ENCODE measurements at regions of chr1 and their contacts with region 1.

Region 1: DNA sequence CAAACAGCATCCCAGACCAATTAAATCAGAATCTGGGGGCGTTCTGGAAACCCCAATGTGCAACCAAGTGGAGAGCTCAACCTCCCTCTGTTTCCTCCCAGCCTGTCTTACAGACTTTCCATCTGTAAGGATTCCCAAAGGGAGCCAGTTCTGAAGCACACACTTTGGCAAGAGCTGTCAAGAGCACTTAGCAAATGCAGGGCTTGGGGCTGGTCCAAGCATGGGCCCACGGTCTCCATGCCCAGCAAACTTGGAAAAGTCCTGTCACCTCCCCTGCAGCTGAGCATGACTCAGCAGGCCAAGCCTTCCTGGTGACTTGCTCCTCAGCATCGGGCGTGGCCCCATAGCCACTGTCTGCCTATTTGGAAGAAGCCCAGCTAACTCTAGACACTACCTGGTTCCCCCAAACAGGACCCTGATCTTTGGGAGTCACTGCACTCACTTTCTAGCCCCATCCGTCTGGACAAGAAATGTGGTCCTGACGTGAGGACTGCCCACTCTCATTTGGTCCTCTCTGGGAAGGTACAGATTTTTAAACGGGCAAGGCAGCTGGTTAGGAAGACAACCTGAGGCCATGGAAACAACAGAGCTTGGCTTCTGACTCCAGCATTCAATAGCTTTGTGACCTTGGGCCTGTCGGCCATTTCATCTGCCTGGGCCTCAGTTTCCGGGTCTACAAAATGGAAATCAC is 16.9 kb downstream of the SLC2A1 start:
- DNase-seq: peak; percentile 80
- ATAC-seq: peak; percentile 50
- H3K4me3 ChIP-seq: peak overlapping the region; percentile 19 to 43
- H3K27ac ChIP-seq: peak overlapping the region; percentile 84
- H3K4me1 ChIP-seq: peaks cover 99 to 100% of the 10 kb centered on the region in 2 experiments
- H3K27me3 ChIP-seq: no peaks in the 10 kb centered on the region
- CTCF ChIP-seq: no peak
- POLR2A ChIP-seq: no peak
- RAD21 ChIP-seq: no peak

Region 2: DNA sequence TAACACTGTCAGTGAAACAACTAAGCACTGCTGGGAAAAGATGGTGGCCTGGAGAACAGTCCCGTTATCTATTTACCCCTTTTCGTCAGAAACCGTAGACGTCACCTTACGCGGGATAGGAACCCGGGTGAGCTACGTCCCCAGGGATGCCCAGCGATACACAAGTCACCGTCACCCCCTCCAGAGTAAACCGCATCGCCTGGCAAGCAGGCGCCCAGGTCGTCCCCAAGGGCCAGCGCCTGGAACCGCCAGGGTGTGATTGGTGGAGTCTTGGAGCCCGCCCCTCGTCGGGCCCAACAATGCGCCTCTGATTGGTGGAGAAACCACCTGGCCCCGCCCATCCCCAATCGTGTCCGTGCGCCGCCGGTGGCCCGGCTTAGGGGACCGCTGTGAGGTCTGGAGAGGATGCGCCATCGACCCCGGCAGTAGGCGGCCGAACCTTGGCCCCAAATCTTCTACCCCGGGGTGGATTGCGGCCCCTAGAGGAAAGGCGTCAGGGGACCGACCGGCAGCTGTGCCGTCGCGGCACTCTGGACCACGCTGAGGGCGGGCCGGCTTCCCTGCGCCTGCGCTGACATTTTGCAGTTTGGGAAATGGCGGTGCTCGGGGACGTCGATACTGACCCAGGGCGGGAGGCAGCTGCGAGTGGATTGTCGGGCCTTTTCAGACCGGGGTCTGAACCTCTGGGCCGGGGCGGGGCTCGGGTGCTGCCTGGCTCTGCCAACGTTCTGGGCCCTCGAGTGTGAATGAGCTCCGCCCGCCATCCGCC is 17.5 kb before region 1 on chr1:
- CTCF ChIA-PET with region 1: interaction called, 12 read pairs
- POLR2A ChIA-PET with region 1: interaction called, 3 read pairs
- RAD21 ChIA-PET with region 1: interaction called, 3 to 4 read pairs
- intact Hi-C with region 1: loop called (anchors 1 kb)
- DNase-seq: peak; percentile 82
- ATAC-seq: peak; percentile 84
- H3K4me3 ChIP-seq: peak overlapping the region; percentile 61 to 70
- H3K27ac ChIP-seq: peak overlapping the region; percentile 81
- H3K4me1 ChIP-seq: peaks cover 9 to 52% of the 10 kb centered on the region in 2 experiments; a peak in 3 of 4 replicates
- H3K27me3 ChIP-seq: no peaks in the 10 kb centered on the region
- CTCF ChIP-seq: 0 out of 6 replicates have a peak, but pooled peaks of 2 of the 3 experiments have one; percentile 21 to 24
- POLR2A ChIP-seq: peak; percentile 72
- RAD21 ChIP-seq: no peak

Region 3: DNA sequence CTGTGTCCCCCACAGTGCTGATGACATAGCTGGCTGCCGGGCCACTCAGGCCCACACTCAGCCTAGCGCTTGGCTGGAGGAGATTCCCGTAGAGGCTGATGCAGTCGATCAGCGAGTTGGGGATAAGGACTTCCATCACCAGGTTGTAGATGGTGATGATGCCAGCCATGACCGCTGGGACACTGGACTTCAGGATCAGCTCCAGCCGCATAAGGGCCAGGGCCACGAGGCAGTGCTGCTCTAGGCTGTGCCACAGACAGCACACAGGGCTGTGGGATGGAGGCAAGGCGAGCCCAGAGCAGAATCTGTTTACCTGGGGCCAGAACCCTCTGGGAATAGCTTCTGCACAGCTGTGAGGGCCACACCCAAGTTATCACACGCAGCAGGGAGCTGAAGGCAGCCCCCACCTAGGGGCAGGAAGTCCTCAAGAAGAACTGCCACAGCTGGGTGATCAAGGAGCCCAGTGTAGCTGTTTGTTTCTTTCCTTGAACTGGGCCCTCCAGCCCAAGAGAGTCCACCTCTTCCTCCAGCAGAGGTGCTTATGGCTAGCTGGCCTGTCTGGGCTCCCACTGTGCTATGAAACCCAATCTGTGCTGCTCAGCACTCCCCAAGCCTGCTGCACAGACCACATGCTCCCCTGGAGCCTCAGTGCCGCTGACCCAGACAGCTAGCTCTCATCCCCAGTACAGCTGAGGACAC is 10.7 kb after region 1 on chr1:
- CTCF ChIA-PET with region 1: no interaction called
- POLR2A ChIA-PET with region 1: interaction called, 11 read pairs
- RAD21 ChIA-PET with region 1: no interaction called
- intact Hi-C with region 1: no loop called
- DNase-seq: no peak
- ATAC-seq: peak; percentile 20; the same call in 1 of the 2 replicates
- H3K4me3 ChIP-seq: no peak overlapping the region
- H3K27ac ChIP-seq: peak overlapping the region; percentile 55
- H3K4me1 ChIP-seq: peaks cover 59 to 95% of the 10 kb centered on the region in 2 experiments
- H3K27me3 ChIP-seq: no peaks in the 10 kb centered on the region
- CTCF ChIP-seq: no peak
- POLR2A ChIP-seq: no peak
- RAD21 ChIP-seq: no peak

Measured in HCT116 (cell line).